ENCODE measurements at regions of chr2 and their contacts with region 1.

Region 1: DNA sequence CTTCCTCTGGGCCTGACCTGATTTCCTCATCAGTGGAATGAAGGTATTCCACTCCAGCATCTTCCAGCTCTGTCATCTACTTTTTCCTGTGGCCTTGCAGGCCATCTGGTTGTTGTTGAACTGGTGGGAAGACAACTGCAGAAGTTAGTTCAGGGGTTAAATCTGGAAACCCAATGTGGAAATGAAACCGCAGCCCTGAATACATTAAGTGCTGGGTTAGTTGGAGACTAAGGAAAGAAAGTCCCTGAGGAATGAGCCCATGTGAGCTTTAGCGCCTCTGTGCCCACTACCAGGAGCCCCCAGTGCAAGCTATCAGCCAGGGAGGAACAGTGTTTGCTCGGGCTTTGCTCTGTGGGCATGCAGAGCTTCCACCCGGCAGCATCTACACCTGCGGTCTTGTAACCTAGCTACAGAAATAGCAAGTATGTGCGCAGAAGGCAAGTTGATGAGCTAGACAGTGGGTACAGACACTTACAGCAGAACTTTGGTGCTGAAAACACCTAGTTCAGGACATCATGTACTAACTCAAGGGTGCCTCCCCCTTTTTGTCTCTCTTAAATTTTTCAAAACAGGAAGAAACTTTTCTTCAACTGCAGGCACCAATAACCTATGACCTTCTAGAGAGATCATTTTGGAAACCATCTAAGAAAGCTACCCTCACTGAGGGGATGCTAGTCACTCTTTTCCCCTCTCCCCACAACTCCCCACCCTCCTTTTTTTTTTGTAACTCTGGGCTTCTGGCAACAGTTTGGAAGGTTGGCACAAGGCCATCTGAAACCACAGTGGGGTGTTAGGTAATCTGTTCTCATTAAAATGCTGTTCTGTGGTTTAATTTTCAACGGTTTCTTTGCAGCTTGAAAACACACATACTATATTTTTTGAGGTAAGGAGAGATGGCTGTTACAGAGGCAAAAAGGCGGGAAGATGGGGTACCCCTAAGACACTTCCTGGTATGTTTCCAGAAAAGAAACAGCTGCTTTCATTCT is 18.3 kb upstream of the CXCR4 start:
- DNase-seq: peak; percentile 73
- ATAC-seq: peak; percentile 57
- H3K4me3 Mint-ChIP-seq: peak overlapping the region; percentile 20
- H3K27ac Mint-ChIP-seq: peak overlapping the region; percentile 78
- H3K4me1 Mint-ChIP-seq: peaks cover 91% of the 10 kb centered on the region
- H3K27me3 Mint-ChIP-seq: peaks cover 19% of the 10 kb centered on the region

Region 2: DNA sequence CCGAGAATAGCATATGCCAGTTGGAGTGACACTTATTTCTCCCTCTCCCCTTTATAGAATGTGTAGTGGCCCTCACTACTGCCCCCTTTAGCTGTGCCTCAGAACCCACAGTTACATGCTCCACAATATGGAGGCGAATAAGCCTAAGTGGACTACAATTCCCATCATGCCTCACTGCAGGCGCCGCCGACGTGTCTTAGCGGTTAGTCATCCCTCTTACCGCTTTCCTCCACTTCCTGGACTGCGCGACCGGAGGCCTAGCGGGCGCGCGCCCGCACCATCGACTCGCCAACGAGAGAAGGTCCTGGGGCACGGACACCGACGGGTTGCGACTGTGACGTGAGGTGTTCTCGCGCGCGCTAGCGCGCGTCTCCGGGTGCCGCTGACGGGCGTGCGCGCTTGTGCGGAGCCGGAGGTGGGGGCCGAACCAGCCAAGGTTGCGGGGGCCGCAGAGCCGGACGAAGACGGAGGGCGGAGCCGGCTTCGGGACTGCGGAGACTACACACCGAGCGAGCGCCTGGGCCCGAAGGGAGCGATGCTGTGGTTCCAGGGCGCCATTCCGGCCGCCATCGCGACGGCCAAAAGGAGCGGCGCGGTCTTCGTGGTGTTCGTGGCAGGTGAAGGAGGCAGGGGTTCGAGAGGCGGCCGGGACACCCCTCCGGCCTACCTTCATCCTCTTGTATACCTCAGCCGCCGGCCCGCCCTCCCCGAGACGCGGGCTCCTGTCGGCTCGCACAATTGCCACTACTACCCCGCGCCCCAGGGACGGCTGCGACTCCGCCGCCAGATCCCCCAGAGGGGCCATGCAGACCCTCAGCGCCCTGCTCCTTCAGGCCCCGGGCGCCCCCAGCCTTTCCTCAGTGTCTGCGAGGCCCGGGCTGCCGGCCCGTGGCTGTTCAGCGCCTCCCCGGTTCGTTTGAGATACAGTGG is 394.6 kb before region 1 on chr2 and contains the start of gene UBXN4:
- CTCF ChIA-PET with region 1: no interaction called
- POLR2A ChIA-PET with region 1: no interaction called
- intact Hi-C with region 1: loop called (anchors 5 kb)
- DNase-seq: peak; percentile 98
- ATAC-seq: peak; percentile 93
- H3K4me3 Mint-ChIP-seq: peak within 1 kb of the TSS; percentile 97
- H3K27ac Mint-ChIP-seq: peak within 1 kb of the TSS; percentile 99
- H3K4me1 Mint-ChIP-seq: peaks cover 35% of the 10 kb centered on the region
- H3K27me3 Mint-ChIP-seq: no peaks in the 10 kb centered on the region
- total RNA-seq, gene UBXN4: 97.0 to 104 TPM

Region 3: GRCh38 chr2:135812907-135813502 is 323.2 kb before region 1 on chr2:
- CTCF ChIA-PET with region 1: no interaction called
- POLR2A ChIA-PET with region 1: no interaction called
- intact Hi-C with region 1: no loop called
- DNase-seq: no peak
- ATAC-seq: no peak
- H3K4me3 Mint-ChIP-seq: no peak overlapping the region
- H3K27ac Mint-ChIP-seq: no peak overlapping the region
- H3K4me1 Mint-ChIP-seq: peaks cover 25% of the 10 kb centered on the region
- H3K27me3 Mint-ChIP-seq: no peaks in the 10 kb centered on the region

Region 4: DNA sequence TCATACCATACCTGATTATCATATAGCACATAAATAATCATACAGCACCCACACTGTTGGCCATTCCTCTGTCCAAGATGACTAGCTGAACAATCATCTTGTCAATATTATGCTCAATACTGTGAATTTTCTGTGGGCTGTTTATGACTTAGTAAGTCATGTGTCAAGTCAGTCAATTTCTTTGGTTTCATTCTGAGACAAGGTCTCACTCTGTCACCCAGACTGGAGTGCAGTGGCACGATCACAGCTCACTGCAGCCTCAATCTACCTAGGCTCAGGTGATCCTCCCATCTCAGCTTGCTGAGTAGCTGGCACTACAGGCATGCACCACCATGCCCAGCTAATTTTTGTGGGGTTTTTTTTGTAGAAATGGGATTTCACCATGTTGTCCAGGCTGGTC is 265.6 kb before region 1 on chr2:
- CTCF ChIA-PET with region 1: no interaction called
- POLR2A ChIA-PET with region 1: no interaction called
- intact Hi-C with region 1: no loop called
- DNase-seq: peak; percentile 38
- ATAC-seq: peak; percentile 80
- H3K4me3 Mint-ChIP-seq: no peak overlapping the region
- H3K27ac Mint-ChIP-seq: peak overlapping the region; percentile 40
- H3K4me1 Mint-ChIP-seq: peaks cover 56% of the 10 kb centered on the region
- H3K27me3 Mint-ChIP-seq: no peaks in the 10 kb centered on the region

Region 5: DNA sequence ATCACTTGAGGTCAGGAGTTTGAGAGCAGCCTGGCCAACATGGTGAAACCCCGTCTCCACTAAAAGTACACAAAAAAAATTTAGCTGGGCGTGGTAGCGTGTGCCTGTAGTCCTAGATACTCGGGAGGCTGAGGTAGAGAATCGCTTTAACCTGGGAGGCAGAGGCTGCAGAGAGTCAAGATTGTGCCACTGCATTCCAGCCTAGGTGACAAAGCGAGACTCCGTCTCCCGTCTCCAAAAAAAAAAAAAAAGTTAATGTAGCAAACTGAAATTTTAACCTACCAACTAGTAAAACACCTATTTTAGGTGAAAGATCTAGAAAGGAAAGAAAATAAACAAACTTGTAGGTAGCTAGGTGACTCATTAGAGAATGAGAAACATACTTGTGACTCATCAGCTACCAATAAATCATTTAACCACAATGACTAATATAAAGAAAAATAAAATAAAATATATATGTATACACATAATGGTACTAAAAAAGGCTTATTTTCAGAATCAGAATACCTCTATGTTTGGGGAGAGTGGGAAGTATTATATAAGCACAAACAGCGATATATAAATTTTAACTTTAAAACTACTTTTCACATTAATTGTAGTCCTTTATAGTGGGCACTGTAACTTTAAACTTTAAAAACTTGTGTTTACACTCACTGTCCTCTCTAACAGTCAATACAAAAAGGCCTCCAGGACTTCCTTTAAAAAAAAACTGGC is 187.4 kb before region 1 on chr2:
- CTCF ChIA-PET with region 1: interaction called, 4 read pairs
- POLR2A ChIA-PET with region 1: no interaction called
- intact Hi-C with region 1: loop called (anchors 1 to 5 kb)
- DNase-seq: no peak
- ATAC-seq: peak; percentile 81
- H3K4me3 Mint-ChIP-seq: peak overlapping the region; percentile 39
- H3K27ac Mint-ChIP-seq: peak overlapping the region; percentile 84
- H3K4me1 Mint-ChIP-seq: peaks cover 55% of the 10 kb centered on the region
- H3K27me3 Mint-ChIP-seq: no peaks in the 10 kb centered on the region

Region 6: GRCh38 chr2:136059036-136059472 is 77.2 kb before region 1 on chr2:
- CTCF ChIA-PET with region 1: interaction called, 5 read pairs
- POLR2A ChIA-PET with region 1: interaction called, 9 read pairs
- intact Hi-C with region 1: loop called (anchors 1 kb)
- DNase-seq: no peak
- ATAC-seq: no peak
- H3K4me3 Mint-ChIP-seq: no peak overlapping the region
- H3K27ac Mint-ChIP-seq: no peak overlapping the region
- H3K4me1 Mint-ChIP-seq: peaks cover 49% of the 10 kb centered on the region
- H3K27me3 Mint-ChIP-seq: no peaks in the 10 kb centered on the region

Region 7: GRCh38 chr2:136212423-136213378 is 76.5 kb after region 1 on chr2:
- CTCF ChIA-PET with region 1: interaction called, 6 read pairs
- POLR2A ChIA-PET with region 1: interaction called, 8 read pairs
- intact Hi-C with region 1: loop called (anchors 2 kb)
- DNase-seq: peak; percentile 51
- ATAC-seq: peak; percentile 95
- H3K4me3 Mint-ChIP-seq: no peak overlapping the region
- H3K27ac Mint-ChIP-seq: peak overlapping the region; percentile 72
- H3K4me1 Mint-ChIP-seq: peaks cover 42% of the 10 kb centered on the region
- H3K27me3 Mint-ChIP-seq: no peaks in the 10 kb centered on the region

Region 8: DNA sequence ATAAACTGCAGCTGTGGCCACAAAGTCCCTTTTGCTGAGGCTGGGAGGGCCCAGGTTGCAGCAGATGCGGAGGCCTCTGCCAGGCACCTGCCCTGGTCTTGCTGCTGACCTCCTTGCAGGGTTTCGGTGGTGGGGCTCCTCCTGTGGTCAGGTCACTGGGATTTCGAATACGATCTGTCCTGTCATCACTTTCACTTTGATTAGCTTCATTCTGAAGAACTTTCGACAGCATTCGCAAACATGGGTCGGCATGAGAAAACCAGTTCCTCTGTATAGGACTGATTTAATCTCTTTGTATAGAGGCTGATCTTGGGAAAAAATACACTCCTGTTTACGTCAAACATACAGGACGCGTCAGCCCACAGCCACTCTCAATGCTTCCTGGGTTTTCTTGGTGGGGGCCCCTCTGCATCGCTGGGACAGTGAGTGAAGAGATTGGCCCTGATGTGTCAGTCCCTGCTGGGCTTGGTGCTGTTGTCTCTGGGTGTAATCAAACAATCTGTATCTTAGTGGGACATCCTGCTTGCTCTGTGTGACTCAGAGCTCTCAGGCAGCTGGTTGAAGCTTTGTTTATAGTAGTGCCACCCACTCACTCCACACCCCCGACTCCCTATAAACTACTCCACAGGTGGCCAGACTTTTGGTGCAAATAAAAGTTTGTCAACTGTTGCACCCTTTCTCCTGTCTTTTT is 191.1 kb after region 1 on chr2:
- CTCF ChIA-PET with region 1: interaction called, 5 read pairs
- POLR2A ChIA-PET with region 1: interaction called, 19 read pairs
- intact Hi-C with region 1: loop called (anchors 1 kb)
- DNase-seq: peak; percentile 88
- ATAC-seq: peak; percentile 95
- H3K4me3 Mint-ChIP-seq: peak overlapping the region; percentile 56
- H3K27ac Mint-ChIP-seq: peak overlapping the region; percentile 92
- H3K4me1 Mint-ChIP-seq: peaks cover 69% of the 10 kb centered on the region
- H3K27me3 Mint-ChIP-seq: no peaks in the 10 kb centered on the region

Region 9: GRCh38 chr2:137826373-137827372 is 1690.5 kb after region 1 on chr2:
- CTCF ChIA-PET with region 1: no interaction called
- POLR2A ChIA-PET with region 1: no interaction called
- intact Hi-C with region 1: no loop called
- DNase-seq: no peak
- ATAC-seq: peak; percentile 57
- H3K4me3 Mint-ChIP-seq: no peak overlapping the region
- H3K27ac Mint-ChIP-seq: no peak overlapping the region
- H3K4me1 Mint-ChIP-seq: no peaks in the 10 kb centered on the region
- H3K27me3 Mint-ChIP-seq: peaks cover 11% of the 10 kb centered on the region